ENCODE measurements at regions of chrX and their contacts with region 1.

Region 1: DNA sequence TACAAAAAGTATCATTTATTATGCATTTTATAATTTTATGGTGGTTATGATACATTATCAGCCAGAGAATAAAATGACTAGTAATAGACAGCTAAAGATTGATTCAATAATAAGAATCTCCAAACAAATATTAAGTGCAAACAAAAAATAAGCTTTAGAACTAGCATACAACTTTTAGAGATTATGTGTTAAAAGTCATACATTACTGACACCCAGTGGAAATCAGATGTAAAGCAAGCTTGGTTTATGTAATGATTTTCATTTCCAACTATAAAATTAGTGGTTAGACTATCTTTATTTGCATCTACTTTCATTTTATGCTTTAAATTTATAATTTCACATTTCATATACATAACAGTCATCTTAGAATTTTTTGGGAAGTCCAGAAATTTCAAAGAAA is 57.7 kb downstream of the IL13RA2 start:
- DNase-seq: no peak
- ATAC-seq: no peak
- H3K4me3 ChIP-seq: no peak overlapping the region
- H3K27ac ChIP-seq: no peak overlapping the region
- H3K4me1 ChIP-seq: no peaks in the 10 kb centered on the region
- H3K27me3 ChIP-seq: no peaks in the 10 kb centered on the region

Region 2: GRCh38 chrX:114611018-114611619 is 348.6 kb before region 1 on chrX:
- intact Hi-C with region 1: loop called in 1 of 4 experiments (anchors 10 kb)
- DNase-seq: no peak
- ATAC-seq: no peak
- H3K4me3 ChIP-seq: no peak overlapping the region
- H3K27ac ChIP-seq: no peak overlapping the region
- H3K4me1 ChIP-seq: no peaks in the 10 kb centered on the region
- H3K27me3 ChIP-seq: no peaks in the 10 kb centered on the region

Region 3: DNA sequence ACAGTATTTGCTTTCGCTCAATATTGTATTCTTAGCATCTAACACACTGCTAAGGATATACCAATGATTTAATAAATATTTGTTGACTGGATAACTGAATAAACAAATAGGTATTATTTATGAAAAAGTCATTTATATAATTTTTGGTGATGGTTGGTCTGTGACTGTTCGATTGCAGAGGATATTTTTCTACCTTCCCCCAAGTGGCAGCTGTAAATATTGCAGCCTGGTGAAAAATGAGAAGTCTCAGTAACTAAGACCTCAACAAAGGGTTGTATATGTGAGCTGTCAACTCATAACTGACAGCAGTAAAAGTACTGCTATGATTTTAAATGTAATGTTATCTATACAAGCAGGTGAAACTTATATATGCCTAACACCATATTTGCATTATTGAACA is 339.9 kb before region 1 on chrX:
- intact Hi-C with region 1: loop called in 2 of 4 experiments (anchors 10 kb)
- DNase-seq: no peak
- ATAC-seq: no peak
- H3K4me3 ChIP-seq: no peak overlapping the region
- H3K27ac ChIP-seq: no peak overlapping the region
- H3K4me1 ChIP-seq: no peaks in the 10 kb centered on the region
- H3K27me3 ChIP-seq: no peaks in the 10 kb centered on the region

Region 4: DNA sequence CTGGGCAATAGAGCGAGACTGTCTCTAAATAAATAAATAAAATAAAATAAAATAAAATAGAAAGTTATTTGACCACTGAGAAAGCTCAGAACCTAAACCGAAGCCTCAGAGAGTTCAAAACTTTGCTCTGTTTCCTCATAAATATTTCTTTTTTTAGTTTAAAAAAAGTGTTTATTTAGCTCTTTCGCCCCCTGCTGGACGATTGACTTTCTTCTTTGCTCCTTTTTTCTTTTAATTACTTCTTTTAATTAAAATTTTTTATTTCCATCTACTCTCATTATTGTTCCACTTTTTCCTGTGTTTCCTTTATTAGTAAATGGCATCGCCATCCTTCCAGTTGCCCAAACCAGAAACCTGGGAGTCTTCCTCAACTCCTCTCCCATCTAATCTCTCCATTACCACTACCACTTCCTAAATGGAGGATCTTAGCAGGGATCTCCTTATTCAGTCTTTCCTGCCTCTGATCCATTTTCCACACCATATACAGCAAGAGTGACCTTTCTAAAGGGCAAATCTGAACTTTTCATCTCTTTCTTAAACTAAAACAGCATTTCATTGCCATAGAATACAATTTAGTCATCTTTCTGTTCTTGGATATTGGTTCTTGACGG is 58.4 kb after region 1 on chrX:
- intact Hi-C with region 1: no loop called
- DNase-seq: no peak
- ATAC-seq: no peak
- H3K4me3 ChIP-seq: no peak overlapping the region
- H3K27ac ChIP-seq: no peak overlapping the region
- H3K4me1 ChIP-seq: no peaks in the 10 kb centered on the region
- H3K27me3 ChIP-seq: no peaks in the 10 kb centered on the region

Region 5: DNA sequence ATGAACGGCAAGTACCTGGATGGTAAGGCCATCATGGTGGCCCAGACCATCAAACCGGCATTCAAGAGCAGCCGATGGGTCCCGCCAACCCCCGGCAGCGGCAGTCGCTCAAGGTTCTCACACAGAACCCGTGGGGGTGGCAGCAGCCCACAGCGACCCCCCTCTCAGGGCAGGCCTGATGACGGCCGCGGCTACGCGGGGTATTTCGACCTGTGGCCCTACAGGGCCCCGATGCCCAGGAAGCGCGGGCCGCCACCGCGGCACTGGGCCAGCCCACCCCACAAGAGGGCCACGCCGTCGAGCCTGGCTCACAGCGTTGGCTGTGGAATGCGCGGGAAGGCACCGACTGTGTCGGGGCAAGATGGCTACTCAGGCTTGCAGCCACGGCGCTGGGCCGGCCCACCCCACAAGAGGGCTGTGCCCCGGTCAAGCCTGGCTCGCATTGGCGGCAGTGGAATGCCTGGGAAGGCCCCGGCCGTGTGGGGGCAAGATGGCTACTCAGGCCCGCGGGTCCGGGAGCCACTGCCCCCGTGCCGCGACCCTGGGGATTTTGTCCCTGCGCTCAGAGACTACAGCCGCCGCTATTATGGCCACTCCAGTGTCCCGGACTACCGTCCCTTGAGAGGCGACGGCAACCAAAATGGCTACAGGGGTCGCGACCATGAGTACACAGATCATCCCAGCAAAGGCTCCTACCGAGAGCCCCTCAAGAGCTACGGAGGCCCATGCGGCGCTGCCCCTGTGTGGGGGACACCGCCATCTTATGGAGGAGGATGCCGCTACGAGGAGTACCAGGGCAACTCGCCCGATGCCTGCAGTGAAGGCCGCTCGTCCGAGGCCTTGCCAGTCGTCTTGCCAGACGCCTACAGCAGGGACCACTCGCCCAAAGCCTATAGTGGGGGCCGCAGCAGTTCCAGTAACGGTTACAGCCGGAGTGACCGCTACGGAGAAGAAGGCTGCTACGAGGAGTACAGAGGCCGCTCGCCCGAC is 230.2 kb after region 1 on chrX:
- intact Hi-C with region 1: no loop called
- DNase-seq: peak in 2 of 3 donors; percentile 46 to 51
- ATAC-seq: no peak
- H3K4me3 ChIP-seq: no peak overlapping the region
- H3K27ac ChIP-seq: no peak overlapping the region
- H3K4me1 ChIP-seq: no peaks in the 10 kb centered on the region
- H3K27me3 ChIP-seq: no peaks in the 10 kb centered on the region